ENCODE measurements at regions of chr3 and their contacts with region 1.

Region 1: GRCh38 chr3:155854141-155854940 is at the start of gene SLC33A1:
- DNase-seq: peak; percentile 94 to 99 (median 99)
- ATAC-seq: peak; percentile 88 to 90
- H3K4me3 Mint-ChIP-seq: peak within 1 kb of the TSS; percentile 93 to 98 (median 96)
- H3K27ac Mint-ChIP-seq: peak within 1 kb of the TSS; percentile 95 to 100 (median 99)
- H3K4me1 Mint-ChIP-seq: peaks cover 11 to 44% (median 35%) of the 10 kb centered on the region in 4 donors
- H3K27me3 Mint-ChIP-seq: no peaks in the 10 kb centered on the region
- polyA plus RNA-seq, gene SLC33A1: 11.2 to 15.2 (median 12.5) TPM

Region 2: DNA sequence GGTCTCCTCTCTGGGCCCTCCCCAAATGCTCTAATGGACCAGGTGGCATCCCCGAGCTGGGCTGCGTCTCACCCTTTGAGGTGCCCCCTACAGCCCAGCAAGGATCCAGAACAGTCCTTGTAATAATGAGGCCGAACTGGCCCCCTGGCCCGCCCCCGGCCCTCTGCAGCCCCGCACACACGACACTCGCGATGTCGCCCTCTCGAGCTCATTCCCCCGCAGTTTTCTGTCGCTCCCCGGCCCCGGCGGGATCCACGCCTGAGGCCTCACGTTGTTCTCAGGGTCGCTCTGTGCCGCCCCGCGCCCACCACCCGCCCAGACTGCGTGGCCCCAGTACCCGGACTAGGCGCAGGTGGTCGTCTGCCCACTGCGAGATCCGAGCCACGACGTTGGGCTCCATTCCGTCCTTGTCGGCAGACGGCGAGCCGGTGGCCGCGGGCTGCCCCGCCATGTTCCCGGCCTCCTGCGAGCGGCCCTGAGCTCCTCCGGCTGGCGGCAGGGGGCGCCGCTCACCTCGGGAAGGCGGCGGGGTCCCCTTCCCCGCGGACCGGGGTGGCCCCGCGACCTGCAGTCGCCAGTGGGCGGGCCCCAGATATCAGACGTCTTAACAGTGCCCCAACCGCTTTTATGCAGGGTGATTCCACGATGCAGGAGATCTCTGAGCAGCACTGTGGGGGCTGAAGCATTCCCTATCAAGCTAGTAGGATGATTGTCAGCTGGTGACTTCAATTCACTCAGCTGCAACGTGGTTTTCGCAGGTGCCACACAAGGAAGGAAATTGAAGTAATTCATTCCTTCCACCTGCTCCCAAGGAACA is 48.3 kb before region 1 on chr3 and contains the start of gene C3orf33:
- POLR2A ChIA-PET with region 1: interaction called, 21 read pairs
- DNase-seq: peak; percentile 64 to 84 (median 78)
- ATAC-seq: peak; percentile 96 to 97
- H3K4me3 Mint-ChIP-seq: peak within 1 kb of the TSS; percentile 84 to 95 (median 90)
- H3K27ac Mint-ChIP-seq: peak within 1 kb of the TSS; percentile 27 to 93 (median 91)
- H3K4me1 Mint-ChIP-seq: peaks cover 7 to 26% (median 18%) of the 10 kb centered on the region in 4 donors
- H3K27me3 Mint-ChIP-seq: peaks cover 7 to 11% (median 8%) of the 10 kb centered on the region in 5 donors
- polyA plus RNA-seq, gene C3orf33: 3.2 to 5.6 (median 4.4) TPM

Region 3: DNA sequence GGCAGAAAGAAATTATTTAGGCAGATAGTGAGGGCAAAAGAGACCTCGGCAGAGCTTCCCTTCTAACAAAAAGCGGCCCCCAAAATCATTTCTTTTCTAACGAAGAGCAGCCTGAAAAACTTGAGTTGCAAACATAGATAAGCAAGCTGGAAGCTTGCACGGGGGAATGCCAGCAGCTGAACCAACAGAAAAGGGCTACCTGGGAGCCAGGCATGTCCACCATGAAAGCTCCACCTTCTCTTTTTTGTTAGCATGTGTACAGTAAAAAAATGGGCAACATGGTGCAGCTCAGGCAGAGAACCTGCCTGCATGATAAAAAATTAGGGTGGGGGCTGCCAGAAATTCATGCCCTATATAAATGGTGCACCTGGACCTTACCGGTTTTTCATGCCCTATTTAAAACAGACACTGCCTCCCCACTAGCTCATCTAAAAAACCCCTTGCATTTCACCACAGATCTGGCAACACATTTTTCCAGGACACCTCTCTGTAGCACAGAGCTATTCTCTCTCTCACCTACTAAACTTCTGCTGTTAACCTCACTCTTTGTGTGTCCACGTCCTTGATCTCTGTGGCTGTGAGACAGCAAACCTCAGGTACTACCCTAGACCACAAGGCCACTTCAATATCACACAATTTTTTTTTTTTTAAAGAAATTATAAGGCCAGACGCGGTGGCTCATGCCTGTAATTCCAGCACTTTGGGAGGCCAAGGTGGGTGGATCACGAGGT is 18.8 kb before region 1 on chr3:
- POLR2A ChIA-PET with region 1: interaction called, 14 read pairs
- DNase-seq: no peak
- ATAC-seq: no peak
- H3K4me3 Mint-ChIP-seq: no peak overlapping the region
- H3K27ac Mint-ChIP-seq: no peak overlapping the region
- H3K4me1 Mint-ChIP-seq: peaks cover 0 to 15% (median 11%) of the 10 kb centered on the region in 4 donors
- H3K27me3 Mint-ChIP-seq: no peaks in the 10 kb centered on the region

Region 4: GRCh38 chr3:155870133-155870944 is 16.0 kb after region 1 on chr3 and contains the start of gene GMPS:
- POLR2A ChIA-PET with region 1: interaction called, 33 read pairs
- DNase-seq: peak; percentile 92 to 97 (median 95)
- ATAC-seq: peak; percentile 87 to 89
- H3K4me3 Mint-ChIP-seq: peak within 1 kb of the TSS; percentile 91 to 100 (median 96)
- H3K27ac Mint-ChIP-seq: peak within 1 kb of the TSS; percentile 90 to 97 (median 95)
- H3K4me1 Mint-ChIP-seq: peaks cover 5 to 32% (median 24%) of the 10 kb centered on the region in 4 donors
- H3K27me3 Mint-ChIP-seq: no peaks in the 10 kb centered on the region
- polyA plus RNA-seq, gene GMPS: 52.5 to 71.7 (median 60.7) TPM